HAP-1 (cell line): ENCODE measurements at regions of chr1 and their contacts with region 1.

Region 1: GRCh38 chr1:21216835-21217811 is 40.4 kb upstream of the EIF4G3 start:
- DNase-seq: peak; percentile 44 to 84
- H3K4me3 ChIP-seq: no peak overlapping the region
- H3K4me1 ChIP-seq: no peaks in the 10 kb centered on the region
- H3K27me3 ChIP-seq: no peaks in the 10 kb centered on the region

Region 2: GRCh38 chr1:20530906-20531305 is 686.2 kb before region 1 on chr1:
- in situ Hi-C with region 1: loop called (anchors 25 kb)
- DNase-seq: no peak
- H3K4me3 ChIP-seq: no peak overlapping the region
- H3K4me1 ChIP-seq: no peaks in the 10 kb centered on the region
- H3K27me3 ChIP-seq: peaks cover 42% of the 10 kb centered on the region

Region 3: DNA sequence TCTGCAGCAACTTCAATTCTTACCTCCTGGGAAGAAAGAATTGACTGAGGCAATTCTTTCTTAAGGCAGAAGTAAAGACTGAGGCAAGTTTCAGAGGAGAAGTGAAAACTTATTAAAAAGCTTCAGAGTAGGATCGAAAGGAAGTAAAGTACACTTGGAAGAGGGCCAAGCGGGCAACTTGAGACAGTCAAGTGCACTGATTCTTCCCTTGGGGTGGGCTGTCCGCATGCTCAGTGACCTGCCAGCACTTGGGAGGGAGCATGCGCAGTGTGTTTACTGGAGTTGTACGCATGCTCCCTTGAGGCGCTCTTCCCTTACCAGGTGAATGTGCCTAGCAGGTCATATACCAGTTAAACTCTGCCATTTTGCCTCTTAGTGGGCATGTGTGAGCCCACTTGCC is 167.5 kb after region 1 on chr1:
- in situ Hi-C with region 1: no loop called
- DNase-seq: no peak
- H3K4me3 ChIP-seq: no peak overlapping the region
- H3K4me1 ChIP-seq: no peaks in the 10 kb centered on the region
- H3K27me3 ChIP-seq: no peaks in the 10 kb centered on the region